ENCODE measurements at regions of chr6 and their contacts with region 1.

Region 1: GRCh38 chr6:28981833-28982475 is 23.2 kb downstream of the ZNF311 start:
- DNase-seq: peak; percentile 68 to 78
- ATAC-seq: peak; percentile 78 to 87 (median 84)
- H3K4me3 ChIP-seq: peak overlapping the region; percentile 80
- H3K27ac ChIP-seq: peak overlapping the region; percentile 68
- H3K4me1 ChIP-seq: no peaks in the 10 kb centered on the region
- H3K27me3 ChIP-seq: peaks cover 0 to 15% (median 7%) of the 10 kb centered on the region in 3 donors
- CTCF ChIP-seq: no peak

Region 2: DNA sequence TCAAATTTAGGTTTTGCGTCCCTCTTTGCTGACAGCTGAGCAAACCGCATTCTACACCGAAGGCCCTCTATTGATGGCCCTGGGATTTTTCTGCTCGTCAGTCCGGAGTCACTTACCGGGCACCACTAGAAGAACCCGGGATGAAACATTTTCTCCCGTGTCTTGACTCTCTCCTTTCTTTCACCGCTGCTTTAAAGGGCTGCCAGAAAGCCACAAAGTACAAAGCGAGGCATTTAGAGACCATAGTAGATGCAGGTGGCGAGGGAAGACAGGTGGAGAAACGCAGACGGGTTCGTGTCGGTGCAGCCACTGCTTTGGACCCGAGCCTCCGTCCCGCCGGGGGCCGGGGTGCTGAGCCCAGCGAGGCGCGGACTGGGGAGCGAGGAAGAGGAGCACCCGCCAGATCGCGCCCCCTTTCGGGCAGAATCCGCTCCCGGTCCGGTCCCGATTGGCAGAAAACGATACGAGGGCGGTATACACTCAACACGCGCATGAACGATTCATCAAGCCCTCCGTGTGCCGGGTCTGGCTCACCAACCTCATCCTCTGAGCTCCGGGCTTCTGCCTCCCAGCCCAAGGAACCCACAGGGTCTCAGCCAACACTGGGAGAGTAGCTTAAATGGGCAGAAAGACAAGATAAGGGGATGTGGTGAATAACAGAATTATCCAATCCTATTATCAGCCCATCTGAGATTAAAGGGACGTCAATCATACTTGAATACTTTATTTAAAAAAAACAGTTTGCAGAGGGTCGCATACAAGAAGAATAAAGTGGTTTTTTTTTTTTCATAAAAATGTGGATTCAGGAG is 143.1 kb before region 1 on chr6:
- intact Hi-C with region 1: loop called in 1 of 2 experiments (anchors 1 kb)
- DNase-seq: peak; percentile 78 to 79
- ATAC-seq: peak; percentile 76 to 86 (median 79)
- H3K4me3 ChIP-seq: peak overlapping the region; percentile 86
- H3K27ac ChIP-seq: peak overlapping the region; percentile 42
- H3K4me1 ChIP-seq: peaks cover 11% of the 10 kb centered on the region
- H3K27me3 ChIP-seq: peaks cover 0 to 54% (median 3%) of the 10 kb centered on the region in 3 donors
- CTCF ChIP-seq: peak; percentile 44

Region 3: DNA sequence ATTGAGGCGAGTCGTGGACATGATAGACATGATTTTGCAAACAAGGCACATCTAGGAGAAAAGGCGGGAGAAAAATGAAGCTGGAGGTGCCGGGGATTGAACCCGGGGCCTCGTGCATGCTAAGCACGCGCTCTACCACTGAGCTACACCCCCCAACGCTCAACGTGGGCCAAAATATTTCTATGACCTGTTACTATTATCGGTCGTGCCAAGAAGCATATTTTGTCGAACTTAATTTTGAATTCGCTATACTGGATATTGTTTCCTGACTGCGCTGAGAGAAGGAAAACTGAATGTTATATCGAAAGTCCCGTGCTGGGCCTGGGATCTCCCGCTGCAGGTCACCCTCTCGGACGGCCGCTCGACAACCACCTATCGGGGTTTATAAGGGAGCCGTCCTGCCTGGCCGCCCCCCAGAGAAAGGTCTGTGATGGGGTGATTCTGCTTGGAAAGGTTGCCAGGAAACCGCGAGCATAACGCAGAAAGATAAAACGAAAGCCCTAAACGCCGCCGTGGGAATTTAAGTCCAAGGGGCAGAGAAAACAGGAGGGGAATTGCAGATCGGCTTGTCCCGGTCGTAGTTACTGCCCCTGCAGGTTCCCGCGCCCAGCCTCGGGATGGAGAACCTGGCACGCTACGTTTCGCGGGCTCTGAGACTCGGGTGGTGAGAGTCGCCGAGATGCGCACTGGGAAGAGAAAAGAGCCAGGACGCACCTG is 118.2 kb before region 1 on chr6:
- intact Hi-C with region 1: loop called in 1 of 2 experiments (anchors 2 kb)
- DNase-seq: peak; percentile 46 to 73
- ATAC-seq: peak; percentile 88 to 90 (median 90)
- H3K4me3 ChIP-seq: peak overlapping the region; percentile 82
- H3K27ac ChIP-seq: no peak overlapping the region
- H3K4me1 ChIP-seq: no peaks in the 10 kb centered on the region
- H3K27me3 ChIP-seq: peaks cover 0 to 16% (median 13%) of the 10 kb centered on the region in 3 donors
- CTCF ChIP-seq: no peak

Region 4: DNA sequence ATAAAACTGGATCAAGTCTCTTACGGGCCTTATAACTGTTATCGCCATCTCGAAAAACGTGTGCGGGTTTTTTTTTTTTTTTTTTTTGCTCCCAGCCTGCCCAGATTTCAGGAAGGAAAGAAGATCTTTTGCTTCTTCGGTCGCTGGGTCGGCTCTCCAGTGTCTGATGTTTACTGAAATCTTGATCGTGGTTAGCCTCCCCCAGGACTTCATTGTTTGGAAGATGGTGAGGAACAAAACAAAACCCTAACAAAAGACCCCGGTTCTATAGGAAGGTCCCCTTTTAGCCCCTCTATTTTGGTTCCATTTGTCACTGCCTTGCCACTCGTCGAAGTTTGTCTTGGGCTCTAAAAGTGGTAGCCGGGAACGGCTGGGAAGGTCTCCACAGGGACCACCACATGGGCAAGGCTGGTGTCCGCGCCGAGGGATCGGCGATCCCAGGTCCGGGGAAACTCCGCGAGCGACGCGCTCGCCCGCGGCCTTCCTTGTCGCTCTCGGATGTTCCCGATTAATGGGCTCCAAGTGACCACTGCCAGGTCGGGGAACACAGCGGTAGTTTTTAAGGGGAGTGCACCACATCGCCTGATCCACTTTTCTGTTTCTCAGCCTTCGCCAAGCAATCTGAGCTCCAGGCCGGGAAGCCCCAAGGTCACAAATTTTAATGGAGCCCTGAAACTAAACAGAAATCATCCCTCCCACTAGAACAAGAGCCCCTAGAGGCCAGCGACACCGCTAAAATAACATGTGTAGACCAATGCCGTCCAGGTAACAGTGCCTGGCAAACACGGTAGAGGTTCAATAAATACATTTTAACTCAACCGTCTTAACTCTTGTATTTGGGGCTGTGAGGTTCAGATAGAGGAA is 85.2 kb before region 1 on chr6:
- intact Hi-C with region 1: loop called in 1 of 2 experiments (anchors 1 kb)
- DNase-seq: peak; percentile 54 to 74
- ATAC-seq: peak; percentile 49 to 68 (median 58)
- H3K4me3 ChIP-seq: peak overlapping the region; percentile 73
- H3K27ac ChIP-seq: peak overlapping the region; percentile 91
- H3K4me1 ChIP-seq: peaks cover 6% of the 10 kb centered on the region
- H3K27me3 ChIP-seq: no peaks in the 10 kb centered on the region
- CTCF ChIP-seq: peak; percentile 34

Region 5: GRCh38 chr6:28940858-28941680 is 40.9 kb before region 1 on chr6:
- intact Hi-C with region 1: loop called in 1 of 2 experiments (anchors 1 kb)
- DNase-seq: peak; percentile 51 to 67
- ATAC-seq: peak; percentile 78 to 89 (median 86)
- H3K4me3 ChIP-seq: peak overlapping the region; percentile 71
- H3K27ac ChIP-seq: peak overlapping the region; percentile 48
- H3K4me1 ChIP-seq: peaks cover 16% of the 10 kb centered on the region
- H3K27me3 ChIP-seq: peaks cover 0 to 23% (median 0%) of the 10 kb centered on the region in 3 donors
- CTCF ChIP-seq: no peak

Region 6: GRCh38 chr6:29016559-29017427 is 34.8 kb after region 1 on chr6:
- intact Hi-C with region 1: loop called in 1 of 2 experiments (anchors 5 kb)
- DNase-seq: peak; percentile 71 to 80
- ATAC-seq: peak; percentile 78 to 97 (median 82)
- H3K4me3 ChIP-seq: peak overlapping the region; percentile 65
- H3K27ac ChIP-seq: no peak overlapping the region
- H3K4me1 ChIP-seq: no peaks in the 10 kb centered on the region
- H3K27me3 ChIP-seq: peaks cover 0 to 50% (median 15%) of the 10 kb centered on the region in 3 donors
- CTCF ChIP-seq: peak; percentile 80

Region 7: GRCh38 chr6:29216528-29216927 is 234.6 kb after region 1 on chr6:
- intact Hi-C with region 1: no loop called
- DNase-seq: no peak
- ATAC-seq: no peak
- H3K4me3 ChIP-seq: no peak overlapping the region
- H3K27ac ChIP-seq: no peak overlapping the region
- H3K4me1 ChIP-seq: no peaks in the 10 kb centered on the region
- H3K27me3 ChIP-seq: no peaks in the 10 kb centered on the region
- CTCF ChIP-seq: no peak

Measured in psoas muscle (tissue), 8 donors.